Naive thymus-derived CD4-positive, alpha-beta T cell (primary cell): ENCODE measurements at regions of chr1 and their contacts with region 1.

Region 1: DNA sequence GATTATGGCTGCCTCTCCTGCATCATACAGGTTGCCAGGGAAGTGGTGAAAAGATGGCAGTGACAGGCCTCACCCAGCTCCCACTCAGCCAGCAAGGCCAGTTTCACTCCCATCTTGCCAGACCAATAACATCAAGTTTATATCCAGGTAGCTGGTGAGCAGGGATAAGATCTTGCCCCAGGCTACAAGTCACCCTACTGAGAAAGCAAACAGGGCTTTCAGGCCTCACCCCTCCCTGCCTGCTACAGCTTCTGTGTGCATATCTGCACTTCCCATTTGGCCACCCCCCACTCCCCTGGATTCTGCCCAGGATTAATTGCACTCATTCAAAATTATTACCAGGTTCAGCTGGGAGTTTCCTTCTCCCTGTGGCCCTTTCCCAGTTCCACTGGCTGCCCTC is 352.2 kb downstream of the TBX15 start:
- DNase-seq: no peak
- ATAC-seq: no peak
- H3K4me3 ChIP-seq: no peak overlapping the region
- H3K4me3 Mint-ChIP-seq: no peak overlapping the region
- H3K27ac ChIP-seq: no peak overlapping the region
- H3K27ac Mint-ChIP-seq: no peak overlapping the region
- H3K4me1 ChIP-seq: no peaks in the 10 kb centered on the region
- H3K4me1 Mint-ChIP-seq: no peaks in the 10 kb centered on the region
- H3K27me3 ChIP-seq: no peaks in the 10 kb centered on the region
- H3K27me3 Mint-ChIP-seq: peaks cover 0 to 4% (median 0%) of the 10 kb centered on the region in 5 donors

Region 2: DNA sequence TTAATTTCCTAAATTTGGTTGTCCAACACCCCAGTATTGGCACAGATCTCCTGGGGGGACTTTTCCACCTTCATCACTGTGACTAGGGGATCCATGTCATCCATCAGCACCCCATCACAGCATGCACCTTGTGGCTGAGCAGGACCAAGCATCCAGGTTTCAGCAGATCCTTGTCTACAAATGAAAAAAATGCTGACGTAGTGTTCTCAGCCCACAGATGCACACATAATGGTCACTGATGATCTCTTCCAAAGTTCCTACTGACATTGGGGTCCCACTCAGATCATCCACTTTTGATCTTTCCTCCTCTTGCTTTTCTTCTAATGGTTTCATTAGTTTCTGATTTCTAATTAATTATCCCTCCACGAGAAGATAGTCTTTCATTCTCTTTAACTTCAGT is 20.9 kb before region 1 on chr1:
- CTCF ChIA-PET with region 1: no interaction called
- POLR2A ChIA-PET with region 1: no interaction called
- intact Hi-C with region 1: loop called in 1 of 2 experiments (anchors 1 kb)
- DNase-seq: no peak
- ATAC-seq: no peak
- H3K4me3 ChIP-seq: no peak overlapping the region
- H3K4me3 Mint-ChIP-seq: no peak overlapping the region
- H3K27ac ChIP-seq: no peak overlapping the region
- H3K27ac Mint-ChIP-seq: no peak overlapping the region
- H3K4me1 ChIP-seq: no peaks in the 10 kb centered on the region
- H3K4me1 Mint-ChIP-seq: no peaks in the 10 kb centered on the region
- H3K27me3 ChIP-seq: no peaks in the 10 kb centered on the region
- H3K27me3 Mint-ChIP-seq: no peaks in the 10 kb centered on the region